CD8-positive, alpha-beta T cell (primary cell): ENCODE measurements at regions of chr2 and their contacts with region 1.

Region 1: DNA sequence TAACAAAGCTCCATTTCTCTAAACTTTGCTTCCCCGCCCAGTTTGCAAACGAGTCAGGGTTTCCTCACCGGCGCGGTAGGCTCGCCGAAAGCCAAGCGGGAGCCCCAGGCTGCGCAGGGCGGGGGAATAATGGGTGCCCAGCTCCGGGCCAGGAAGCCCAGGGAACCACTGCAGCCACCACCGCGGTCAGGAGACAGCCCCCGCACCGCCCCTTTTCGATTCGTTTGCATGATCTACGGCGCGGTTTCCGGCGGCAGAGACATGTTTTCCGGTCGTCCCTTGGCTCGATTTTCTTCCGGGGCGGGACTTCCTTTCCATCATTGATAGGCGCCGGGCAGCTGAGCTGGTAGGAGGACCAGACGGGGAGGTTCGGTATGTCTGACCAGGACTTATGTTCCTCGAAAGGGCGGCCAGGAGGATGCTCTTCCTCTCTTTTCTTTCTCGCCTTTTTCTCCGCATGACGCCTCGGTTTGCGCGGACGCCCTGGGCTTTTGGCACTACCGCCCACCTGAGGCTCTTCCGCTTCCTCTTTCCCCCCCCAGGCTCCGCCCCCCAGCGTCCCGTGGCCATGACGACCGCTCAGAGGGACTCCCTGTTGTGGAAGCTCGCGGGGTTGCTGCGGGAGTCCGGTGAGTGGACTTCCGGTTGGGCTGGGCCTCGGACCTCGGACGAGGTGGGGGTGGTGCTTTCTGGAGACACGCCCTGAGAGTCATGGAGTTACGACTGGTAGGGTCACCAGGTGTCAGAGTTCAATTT is at the start of gene STK11IP:
- DNase-seq: peak; percentile 74 to 95 (median 90)
- ATAC-seq: peak; percentile 84
- H3K4me3 ChIP-seq: peak within 1 kb of the TSS; percentile 79 to 90
- H3K4me3 Mint-ChIP-seq: peak within 1 kb of the TSS; percentile 97
- H3K27ac ChIP-seq: peak within 1 kb of the TSS; percentile 77 to 83
- H3K27ac Mint-ChIP-seq: peak within 1 kb of the TSS; percentile 97
- H3K4me1 ChIP-seq: peaks cover 9% of the 10 kb centered on the region
- H3K4me1 Mint-ChIP-seq: peaks cover 27% of the 10 kb centered on the region
- H3K27me3 ChIP-seq: no peaks in the 10 kb centered on the region
- H3K27me3 Mint-ChIP-seq: no peaks in the 10 kb centered on the region
- CTCF ChIP-seq: no peak
- total RNA-seq, gene STK11IP: 29.7 to 31.5 TPM

Region 2: GRCh38 chr2:218671654-218672566 is 925.8 kb before region 1 on chr2 and contains the starts of genes RNF25 and STK36:
- CTCF ChIA-PET with region 1: no interaction called
- POLR2A ChIA-PET with region 1: no interaction called
- intact Hi-C with region 1: loop called in 1 of 2 experiments (anchors 5 kb)
- DNase-seq: peak; percentile 56 to 90 (median 82)
- ATAC-seq: peak; percentile 92
- H3K4me3 ChIP-seq: peak within 1 kb of the TSS; percentile 80 to 86
- H3K4me3 Mint-ChIP-seq: peak within 1 kb of the TSS; percentile 97
- H3K27ac ChIP-seq: peak within 1 kb of the TSS; percentile 74 to 83
- H3K27ac Mint-ChIP-seq: peak within 1 kb of the TSS; percentile 96
- H3K4me1 ChIP-seq: peaks cover 16% of the 10 kb centered on the region
- H3K4me1 Mint-ChIP-seq: peaks cover 25% of the 10 kb centered on the region
- H3K27me3 ChIP-seq: no peaks in the 10 kb centered on the region
- H3K27me3 Mint-ChIP-seq: no peaks in the 10 kb centered on the region
- CTCF ChIP-seq: no peak
- total RNA-seq, gene RNF25: 26.0 to 29.3 TPM
- total RNA-seq, gene STK36: 7.5 to 8.1 TPM

Region 3: DNA sequence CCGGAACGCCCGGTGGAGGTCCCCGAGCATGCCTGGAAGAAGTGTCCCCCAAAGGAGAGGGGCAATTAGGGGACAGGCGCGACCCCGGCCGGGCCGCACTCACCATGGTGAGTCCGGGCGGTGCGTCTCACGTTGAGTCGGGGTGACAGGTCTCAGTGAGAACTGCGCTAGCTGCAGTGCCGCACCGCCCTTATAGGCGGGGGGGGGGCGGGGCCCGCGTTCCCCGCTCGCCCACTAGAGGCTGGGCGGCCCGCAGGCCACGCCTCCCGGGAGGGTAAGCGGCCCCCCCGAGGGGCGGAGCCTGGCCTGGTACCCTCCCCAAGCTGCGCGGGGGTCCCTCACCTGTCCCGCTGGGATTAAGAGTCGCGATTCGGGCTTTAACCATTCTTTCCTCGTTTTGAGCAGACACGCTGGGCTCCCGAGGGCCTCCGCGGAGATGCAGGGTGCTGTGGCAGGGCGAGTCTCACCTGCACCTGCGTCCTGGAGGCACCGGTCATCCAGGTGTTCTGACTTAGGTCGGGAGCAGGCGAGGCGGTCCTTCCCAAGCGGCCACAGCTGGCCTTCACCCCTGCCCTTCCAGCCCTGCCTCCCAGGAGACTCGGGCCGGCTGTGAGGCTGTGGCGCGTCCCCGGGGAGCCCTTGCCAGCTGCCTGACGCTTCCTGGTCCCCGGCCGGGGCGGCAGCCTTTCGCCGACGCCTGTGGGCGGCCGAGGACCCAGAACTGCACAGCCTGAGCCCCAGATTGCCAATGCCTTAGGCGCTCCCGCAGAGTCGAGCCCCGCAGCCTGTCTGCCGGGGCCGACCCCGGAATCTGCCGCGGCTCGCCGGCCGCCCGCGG is 343.8 kb before region 1 on chr2 and contains the start of gene TUBA4A:
- CTCF ChIA-PET with region 1: no interaction called
- POLR2A ChIA-PET with region 1: no interaction called
- intact Hi-C with region 1: loop called in 1 of 2 experiments (anchors 5 kb)
- DNase-seq: peak; percentile 82 to 95 (median 91)
- ATAC-seq: peak; percentile 74
- H3K4me3 ChIP-seq: peak within 1 kb of the TSS; percentile 98 to 100
- H3K4me3 Mint-ChIP-seq: peak within 1 kb of the TSS; percentile 87
- H3K27ac ChIP-seq: peak within 1 kb of the TSS; percentile 81 to 93
- H3K27ac Mint-ChIP-seq: peak within 1 kb of the TSS; percentile 96
- H3K4me1 ChIP-seq: peaks cover 37% of the 10 kb centered on the region
- H3K4me1 Mint-ChIP-seq: peaks cover 46% of the 10 kb centered on the region
- H3K27me3 ChIP-seq: no peaks in the 10 kb centered on the region
- H3K27me3 Mint-ChIP-seq: no peaks in the 10 kb centered on the region
- CTCF ChIP-seq: no peak
- total RNA-seq, gene TUBA4A: 322 TPM

Region 4: GRCh38 chr2:219521066-219521880 is 76.5 kb before region 1 on chr2:
- CTCF ChIA-PET with region 1: no interaction called
- POLR2A ChIA-PET with region 1: no interaction called
- intact Hi-C with region 1: no loop called
- DNase-seq: peak in 2 of 9 experiments; percentile 18 to 31
- ATAC-seq: peak; percentile 51
- H3K4me3 ChIP-seq: no peak overlapping the region
- H3K4me3 Mint-ChIP-seq: no peak overlapping the region
- H3K27ac ChIP-seq: no peak overlapping the region
- H3K27ac Mint-ChIP-seq: no peak overlapping the region
- H3K4me1 ChIP-seq: peaks cover 22% of the 10 kb centered on the region
- H3K4me1 Mint-ChIP-seq: peaks cover 12% of the 10 kb centered on the region
- H3K27me3 ChIP-seq: peaks cover 20 to 35% of the 10 kb centered on the region in 2 experiments
- H3K27me3 Mint-ChIP-seq: peaks cover 80% of the 10 kb centered on the region
- CTCF ChIP-seq: no peak

Region 5: GRCh38 chr2:219552382-219553167 is 45.2 kb before region 1 on chr2:
- CTCF ChIA-PET with region 1: no interaction called
- POLR2A ChIA-PET with region 1: interaction called, 7 read pairs
- intact Hi-C with region 1: loop called (anchors 1 to 2 kb)
- DNase-seq: peak; percentile 58 to 89 (median 80)
- ATAC-seq: peak; percentile 90
- H3K4me3 ChIP-seq: peak overlapping the region; percentile 49 to 67
- H3K4me3 Mint-ChIP-seq: peak overlapping the region; percentile 79
- H3K27ac ChIP-seq: no peak overlapping the region
- H3K27ac Mint-ChIP-seq: no peak overlapping the region
- H3K4me1 ChIP-seq: peaks cover 17% of the 10 kb centered on the region
- H3K4me1 Mint-ChIP-seq: peaks cover 12% of the 10 kb centered on the region
- H3K27me3 ChIP-seq: peaks cover 18 to 22% of the 10 kb centered on the region in 2 experiments
- H3K27me3 Mint-ChIP-seq: peaks cover 49% of the 10 kb centered on the region
- CTCF ChIP-seq: no peak